Posterior cingulate gyrus (tissue), 11 donors: ENCODE measurements at regions of chr7 and their contacts with region 1.

Region 1: GRCh38 chr7:31633894-31634494 is 53.0 kb upstream of the PPP1R17 start:
- DNase-seq: peak in 6 of 10 donors; percentile 40 to 92 (median 65)

Region 2: DNA sequence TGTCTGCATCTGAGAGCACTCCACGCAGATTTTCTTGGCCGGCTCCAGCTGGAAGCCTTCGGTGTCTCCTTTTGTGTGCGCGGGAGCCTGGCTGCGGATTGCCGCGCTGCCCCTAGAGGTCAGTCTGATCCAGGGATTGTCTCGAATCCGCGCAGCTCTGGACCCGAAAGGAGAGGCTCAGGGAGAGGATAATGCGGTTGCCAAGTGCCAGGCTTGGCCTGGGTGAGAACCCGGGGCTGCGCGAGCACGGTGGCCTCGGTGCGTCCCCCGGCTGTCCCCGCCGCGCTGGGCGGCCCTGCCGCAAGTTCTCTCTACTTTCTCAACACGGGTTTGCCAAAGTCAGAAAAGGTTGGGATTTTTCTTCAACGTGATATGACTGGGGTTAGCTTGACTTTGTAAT is 441.0 kb before region 1 on chr7:
- intact Hi-C with region 1: loop called (anchors 1 kb)
- DNase-seq: peak; percentile 65 to 97 (median 78)

Region 3: GRCh38 chr7:31373337-31374289 is 260.4 kb before region 1 on chr7:
- intact Hi-C with region 1: loop called (anchors 5 kb)
- DNase-seq: peak in 2 of 10 donors; percentile 27 to 46

Region 4: GRCh38 chr7:31767686-31768358 is 133.8 kb after region 1 on chr7:
- intact Hi-C with region 1: no loop called
- DNase-seq: no peak